ENCODE measurements at regions of chr6 and their contacts with region 1.

Region 1: DNA sequence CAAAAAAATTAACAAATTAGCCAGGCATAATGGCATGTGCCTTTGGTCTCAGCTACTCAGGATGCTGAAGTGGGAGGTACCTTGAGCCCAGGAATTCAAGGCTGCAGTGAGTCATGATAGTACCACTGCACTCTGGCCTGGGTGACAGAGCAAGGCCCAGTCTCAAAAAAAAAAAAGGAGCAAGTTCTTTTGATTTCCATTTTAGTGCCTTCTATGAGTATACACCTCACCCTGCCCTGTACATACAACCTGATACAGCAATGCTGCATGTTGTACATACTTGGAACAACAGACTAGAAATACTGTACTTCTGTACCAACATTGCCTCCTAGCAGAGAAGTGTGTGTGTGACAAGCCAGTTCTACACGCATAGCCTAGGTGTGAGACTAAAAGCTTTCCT is 97.3 kb upstream of the CARMIL1 start:
- DNase-seq: no peak
- H3K4me3 ChIP-seq: no peak overlapping the region
- H3K27ac ChIP-seq: no peak overlapping the region
- H3K4me1 ChIP-seq: peaks cover 2% of the 10 kb centered on the region
- H3K27me3 ChIP-seq: no peaks in the 10 kb centered on the region
- CTCF ChIP-seq: no peak
- EP300 ChIP-seq: no peak
- POLR2A ChIP-seq: no peak

Region 2: GRCh38 chr6:25122001-25122400 is 59.9 kb before region 1 on chr6:
- intact Hi-C with region 1: loop called in 1 of 4 experiments (anchors 10 kb)
- DNase-seq: peak in 2 of 5 donors; percentile 29 to 38
- H3K4me3 ChIP-seq: no peak overlapping the region
- H3K27ac ChIP-seq: no peak overlapping the region
- H3K4me1 ChIP-seq: peaks cover 4% of the 10 kb centered on the region
- H3K27me3 ChIP-seq: no peaks in the 10 kb centered on the region
- CTCF ChIP-seq: no peak
- EP300 ChIP-seq: no peak
- POLR2A ChIP-seq: no peak

Region 3: GRCh38 chr6:25138237-25139125 is 43.4 kb before region 1 on chr6:
- intact Hi-C with region 1: no loop called
- DNase-seq: peak; percentile 49 to 60 (median 52)
- H3K4me3 ChIP-seq: peak overlapping the region; percentile 40
- H3K27ac ChIP-seq: peak overlapping the region; percentile 33 to 80
- H3K4me1 ChIP-seq: no peaks in the 10 kb centered on the region
- H3K27me3 ChIP-seq: no peaks in the 10 kb centered on the region
- CTCF ChIP-seq: peak in 2 of 3 donors; percentile 13 to 42
- EP300 ChIP-seq: no peak
- POLR2A ChIP-seq: peak; percentile 47